ENCODE measurements at regions of chr5 and their contacts with region 1.

Region 1: DNA sequence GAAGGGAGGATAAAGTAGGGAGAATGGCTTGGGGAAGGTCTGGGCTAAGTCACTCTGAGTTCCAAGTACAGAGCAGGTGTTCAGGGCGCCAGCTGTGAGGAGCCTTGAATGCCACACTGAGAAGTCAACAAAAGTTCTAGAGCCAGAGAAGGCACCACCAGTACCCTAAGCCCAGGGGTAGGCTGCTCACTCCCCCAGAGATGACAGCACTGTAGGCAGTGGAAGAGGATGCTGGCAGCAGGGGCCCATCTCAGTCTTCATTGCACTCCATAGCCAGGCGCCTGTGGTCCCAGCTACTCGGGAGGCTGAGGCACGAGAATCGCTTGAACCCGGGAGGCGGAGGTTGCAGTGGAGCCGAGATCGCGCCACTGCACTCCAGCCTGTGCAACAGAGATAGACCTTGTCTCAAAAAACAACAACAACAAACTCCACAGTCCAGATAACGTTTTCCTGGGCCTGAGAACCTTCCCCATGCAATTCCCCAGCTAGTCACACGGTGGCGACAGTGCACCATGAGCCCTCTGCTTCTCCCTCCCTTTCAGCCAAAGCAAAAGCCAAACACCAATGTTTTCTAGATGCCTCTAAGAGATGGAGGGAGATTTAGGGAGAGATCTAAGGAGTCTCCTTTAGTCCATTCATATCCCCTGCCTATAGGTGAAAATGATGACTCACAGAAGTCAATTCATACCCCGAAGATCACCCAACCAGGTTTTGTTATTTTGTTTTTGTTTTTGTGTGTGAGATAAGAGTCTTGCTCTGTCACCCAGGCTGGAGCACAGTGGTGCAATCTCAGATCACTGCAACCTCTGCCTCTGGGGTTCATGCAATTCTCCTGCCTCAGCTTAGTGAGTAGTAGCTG is 19.8 kb upstream of the NSD1 start:
- DNase-seq: peak; percentile 86
- ATAC-seq: peak; percentile 65
- H3K4me3 ChIP-seq: no peak overlapping the region
- H3K4me3 Mint-ChIP-seq: no peak overlapping the region
- H3K27ac ChIP-seq: no peak overlapping the region
- H3K27ac Mint-ChIP-seq: peak overlapping the region; percentile 46
- H3K4me1 ChIP-seq: peaks cover 10 to 21% of the 10 kb centered on the region in 2 donors
- H3K4me1 Mint-ChIP-seq: peaks cover 18% of the 10 kb centered on the region
- H3K27me3 ChIP-seq: no peaks in the 10 kb centered on the region
- H3K27me3 Mint-ChIP-seq: no peaks in the 10 kb centered on the region
- CTCF ChIP-seq: peak; percentile 98

Region 2: GRCh38 chr5:175729829-175730277 is 1383.9 kb before region 1 on chr5:
- CTCF ChIA-PET with region 1: interaction called, 13 read pairs
- POLR2A ChIA-PET with region 1: no interaction called
- intact Hi-C with region 1: no loop called
- DNase-seq: peak; percentile 81
- ATAC-seq: peak; percentile 88
- H3K4me3 ChIP-seq: no peak overlapping the region
- H3K4me3 Mint-ChIP-seq: no peak overlapping the region
- H3K27ac ChIP-seq: no peak overlapping the region
- H3K27ac Mint-ChIP-seq: no peak overlapping the region
- H3K4me1 ChIP-seq: peaks cover 4 to 7% of the 10 kb centered on the region in 2 donors
- H3K4me1 Mint-ChIP-seq: peaks cover 5% of the 10 kb centered on the region
- H3K27me3 ChIP-seq: peaks cover 0 to 26% (median 8%) of the 10 kb centered on the region in 4 experiments
- H3K27me3 Mint-ChIP-seq: peaks cover 49% of the 10 kb centered on the region
- CTCF ChIP-seq: peak; percentile 83

Region 3: GRCh38 chr5:176810084-176810597 is 303.7 kb before region 1 on chr5 and contains the start of gene UNC5A:
- CTCF ChIA-PET with region 1: no interaction called
- POLR2A ChIA-PET with region 1: no interaction called
- intact Hi-C with region 1: no loop called
- DNase-seq: peak; percentile 77
- ATAC-seq: peak; percentile 60
- H3K4me3 ChIP-seq: peak within 1 kb of the TSS in 3 of 5 experiments; percentile 34 to 52 (median 39)
- H3K4me3 Mint-ChIP-seq: peak within 1 kb of the TSS; percentile 87
- H3K27ac ChIP-seq: no peak within 1 kb of the TSS
- H3K27ac Mint-ChIP-seq: peak within 1 kb of the TSS; percentile 15
- H3K4me1 ChIP-seq: peaks cover 15 to 20% of the 10 kb centered on the region in 2 donors
- H3K4me1 Mint-ChIP-seq: peaks cover 18% of the 10 kb centered on the region
- H3K27me3 ChIP-seq: peaks cover 0 to 65% (median 21%) of the 10 kb centered on the region in 4 experiments
- H3K27me3 Mint-ChIP-seq: peaks cover 66% of the 10 kb centered on the region
- CTCF ChIP-seq: no peak
- total RNA-seq, gene UNC5A: not detected in 2 replicates

Region 4: GRCh38 chr5:177071666-177072385 is 42.0 kb before region 1 on chr5:
- CTCF ChIA-PET with region 1: interaction called, 82 read pairs
- POLR2A ChIA-PET with region 1: no interaction called
- intact Hi-C with region 1: loop called (anchors 1 kb)
- DNase-seq: peak; percentile 90
- ATAC-seq: peak; percentile 88
- H3K4me3 ChIP-seq: peak overlapping the region in 3 of 5 experiments; percentile 11 to 25 (median 23)
- H3K4me3 Mint-ChIP-seq: peak overlapping the region; percentile 64
- H3K27ac ChIP-seq: peak overlapping the region; percentile 11 to 79
- H3K27ac Mint-ChIP-seq: peak overlapping the region; percentile 66
- H3K4me1 ChIP-seq: peaks cover 25 to 33% of the 10 kb centered on the region in 2 donors
- H3K4me1 Mint-ChIP-seq: peaks cover 31% of the 10 kb centered on the region
- H3K27me3 ChIP-seq: no peaks in the 10 kb centered on the region
- H3K27me3 Mint-ChIP-seq: no peaks in the 10 kb centered on the region
- CTCF ChIP-seq: peak; percentile 95

Region 5: DNA sequence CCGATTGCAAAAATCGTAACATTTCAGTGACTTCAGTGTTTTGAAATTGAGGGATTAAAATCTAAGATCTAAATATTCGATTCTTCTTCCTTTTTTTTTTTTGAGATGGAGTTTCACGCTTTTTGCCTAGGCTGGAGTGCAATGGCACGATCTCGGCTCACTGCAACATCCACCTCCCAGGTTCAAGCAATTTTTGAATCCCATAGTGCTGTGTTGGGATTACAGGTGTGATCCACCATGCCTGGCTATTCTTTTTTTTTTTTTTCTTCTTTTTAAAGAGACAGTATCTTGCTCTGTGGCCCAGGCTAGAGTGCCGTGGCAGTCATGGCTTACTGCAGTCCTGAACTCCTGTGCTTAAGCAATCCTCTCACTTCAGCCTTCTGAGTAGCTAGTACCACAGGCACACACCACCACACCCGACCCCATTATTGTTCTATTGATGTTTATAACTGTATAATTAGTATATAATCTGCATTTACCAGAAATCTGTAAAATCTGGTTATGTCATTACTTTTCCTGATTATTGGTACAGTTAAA is 62.4 kb after region 1 on chr5:
- CTCF ChIA-PET with region 1: interaction called, 4 read pairs
- POLR2A ChIA-PET with region 1: no interaction called
- intact Hi-C with region 1: loop called (anchors 5 kb)
- DNase-seq: no peak
- ATAC-seq: no peak
- H3K4me3 ChIP-seq: no peak overlapping the region
- H3K4me3 Mint-ChIP-seq: peak overlapping the region; percentile 49
- H3K27ac ChIP-seq: peak overlapping the region in 1 of 2 donors; percentile 52
- H3K27ac Mint-ChIP-seq: peak overlapping the region; percentile 61
- H3K4me1 ChIP-seq: peaks cover 27% of the 10 kb centered on the region in 2 donors
- H3K4me1 Mint-ChIP-seq: peaks cover 55% of the 10 kb centered on the region
- H3K27me3 ChIP-seq: no peaks in the 10 kb centered on the region
- H3K27me3 Mint-ChIP-seq: no peaks in the 10 kb centered on the region
- CTCF ChIP-seq: no peak

Region 6: GRCh38 chr5:177249761-177250526 is 136.1 kb after region 1 on chr5:
- CTCF ChIA-PET with region 1: interaction called, 21 read pairs
- POLR2A ChIA-PET with region 1: interaction called, 5 read pairs
- intact Hi-C with region 1: loop called (anchors 5 kb)
- DNase-seq: no peak
- ATAC-seq: no peak
- H3K4me3 ChIP-seq: no peak overlapping the region
- H3K4me3 Mint-ChIP-seq: no peak overlapping the region
- H3K27ac ChIP-seq: peak overlapping the region in 1 of 2 donors; percentile 15
- H3K27ac Mint-ChIP-seq: no peak overlapping the region
- H3K4me1 ChIP-seq: no peaks in the 10 kb centered on the region
- H3K4me1 Mint-ChIP-seq: no peaks in the 10 kb centered on the region
- H3K27me3 ChIP-seq: no peaks in the 10 kb centered on the region
- H3K27me3 Mint-ChIP-seq: no peaks in the 10 kb centered on the region
- CTCF ChIP-seq: no peak

Region 7: GRCh38 chr5:177311723-177312648 is 198.2 kb after region 1 on chr5 and contains the start of gene MXD3:
- CTCF ChIA-PET with region 1: interaction called, 19 read pairs
- POLR2A ChIA-PET with region 1: no interaction called
- intact Hi-C with region 1: no loop called
- DNase-seq: peak; percentile 94
- ATAC-seq: peak; percentile 89
- H3K4me3 ChIP-seq: peak within 1 kb of the TSS; percentile 15 to 80 (median 63)
- H3K4me3 Mint-ChIP-seq: peak within 1 kb of the TSS; percentile 90
- H3K27ac ChIP-seq: peak within 1 kb of the TSS; percentile 27 to 34
- H3K27ac Mint-ChIP-seq: peak within 1 kb of the TSS; percentile 84
- H3K4me1 ChIP-seq: peaks cover 40 to 58% of the 10 kb centered on the region in 2 donors
- H3K4me1 Mint-ChIP-seq: peaks cover 41% of the 10 kb centered on the region
- H3K27me3 ChIP-seq: no peaks in the 10 kb centered on the region
- H3K27me3 Mint-ChIP-seq: no peaks in the 10 kb centered on the region
- CTCF ChIP-seq: no peak
- total RNA-seq, gene MXD3: 10.8 and 11.5 TPM in 2 replicates

Region 8: GRCh38 chr5:177576169-177576568 is 462.4 kb after region 1 on chr5:
- CTCF ChIA-PET with region 1: no interaction called
- POLR2A ChIA-PET with region 1: no interaction called
- intact Hi-C with region 1: no loop called
- DNase-seq: no peak
- ATAC-seq: no peak
- H3K4me3 ChIP-seq: no peak overlapping the region
- H3K4me3 Mint-ChIP-seq: no peak overlapping the region
- H3K27ac ChIP-seq: no peak overlapping the region
- H3K27ac Mint-ChIP-seq: no peak overlapping the region
- H3K4me1 ChIP-seq: no peaks in the 10 kb centered on the region
- H3K4me1 Mint-ChIP-seq: no peaks in the 10 kb centered on the region
- H3K27me3 ChIP-seq: peaks cover 0 to 5% (median under 1%) of the 10 kb centered on the region in 4 experiments
- H3K27me3 Mint-ChIP-seq: peaks cover 8% of the 10 kb centered on the region
- CTCF ChIP-seq: no peak

Measured in B cell (primary cell).